ENCODE measurements at regions of chr14 and their contacts with region 1.

Region 1: GRCh38 chr14:99729991-99730868 is 46.1 kb downstream of the CYP46A1 start:
- DNase-seq: peak; percentile 26 to 76
- ATAC-seq: peak; percentile 79

Region 2: DNA sequence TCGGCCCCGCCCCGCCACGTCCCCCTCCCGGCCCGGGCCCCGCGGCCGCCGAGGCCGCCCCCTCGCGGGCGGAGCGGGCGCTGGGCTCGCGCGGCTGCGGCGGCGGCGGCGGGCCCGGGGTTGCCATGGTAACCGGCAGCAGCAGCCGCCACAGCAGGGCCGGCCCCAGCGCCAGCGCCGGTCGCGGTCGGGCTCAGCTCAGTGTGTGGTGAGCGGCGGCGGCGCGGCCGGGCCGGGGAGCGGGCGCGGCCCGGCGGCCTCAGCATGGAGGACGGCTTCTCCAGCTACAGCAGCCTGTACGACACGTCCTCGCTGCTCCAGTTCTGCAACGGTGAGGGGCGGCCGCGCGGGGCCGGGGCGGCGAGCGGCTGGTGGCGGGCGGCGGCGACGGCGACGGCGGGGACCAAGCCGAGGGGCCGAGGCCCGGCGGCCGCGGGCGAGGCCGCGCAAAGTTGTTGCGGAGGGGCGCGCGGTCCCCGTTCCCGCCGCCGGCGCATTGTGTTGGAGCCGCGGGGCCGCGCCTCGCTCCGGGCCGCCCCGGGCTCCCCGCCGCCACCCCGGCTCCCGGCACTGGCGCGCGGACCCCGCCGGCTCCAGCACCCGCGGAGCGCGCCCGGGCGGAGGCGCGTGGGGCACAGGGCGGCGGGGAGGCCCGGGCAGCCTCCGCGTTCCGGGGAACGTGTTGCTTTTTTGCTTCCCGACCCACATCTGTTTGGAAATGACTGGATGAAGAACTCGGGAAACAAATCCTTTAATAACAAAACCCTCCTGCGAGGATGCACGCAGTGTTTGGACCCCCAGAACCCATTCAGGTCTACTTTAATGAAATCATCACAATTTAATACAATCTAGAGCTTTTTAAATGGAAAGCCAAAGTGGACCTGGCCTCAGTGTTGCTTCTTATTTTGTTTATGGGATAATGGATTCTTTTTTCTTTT is 63.3 kb after region 1 on chr14 and contains the start of gene EML1:
- intact Hi-C with region 1: loop called in 1 of 2 experiments (anchors 5 kb)
- DNase-seq: peak; percentile 56 to 72
- ATAC-seq: peak; percentile 82
- total RNA-seq, gene EML1: 3.8 to 14.5 TPM

Region 3: DNA sequence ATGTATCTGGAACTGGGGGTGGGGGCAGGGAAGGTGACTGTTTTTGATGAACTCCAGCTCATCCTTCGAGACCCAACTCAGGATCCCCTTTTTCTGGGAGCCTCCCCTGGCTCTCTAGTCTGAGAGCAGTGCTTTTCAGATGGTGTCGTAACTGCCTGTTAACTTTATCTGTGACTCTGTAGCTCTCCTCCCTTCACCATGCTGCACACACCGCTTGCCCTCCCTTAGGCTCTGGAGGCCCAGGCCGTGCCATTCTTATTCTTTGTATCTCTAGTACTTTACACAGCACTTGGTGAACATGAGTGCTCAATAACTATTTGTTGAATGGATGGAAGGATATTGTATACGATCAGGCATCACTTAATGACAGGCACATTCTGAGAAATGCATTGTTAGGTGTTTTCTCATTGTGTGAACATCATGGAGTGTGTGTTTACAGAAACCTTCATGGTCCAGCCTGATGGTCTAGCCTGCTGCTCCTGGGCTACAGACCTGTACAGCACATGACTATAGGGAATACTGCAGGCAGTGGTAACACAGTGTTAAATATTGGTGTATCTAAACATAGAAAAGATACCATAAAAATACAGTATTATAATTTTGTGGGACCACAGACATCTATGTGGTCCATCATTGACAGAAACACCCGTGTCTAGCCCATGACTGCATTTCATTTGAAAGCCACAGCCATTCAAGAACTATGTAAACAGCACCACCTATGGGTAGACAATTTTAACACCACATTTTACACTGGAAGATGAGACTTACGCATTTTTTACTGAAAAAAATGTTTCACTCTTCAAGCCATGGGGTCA is 154.8 kb after region 1 on chr14:
- intact Hi-C with region 1: loop called (anchors 5 kb)
- DNase-seq: no peak
- ATAC-seq: peak; percentile 61

Measured in left colon (tissue), 2 donors.